Heart right ventricle (tissue), 16 donors: ENCODE measurements at regions of chr16 and their contacts with region 1.

Region 1: GRCh38 chr16:69741919-69742904 is 12.5 kb downstream of the NOB1 start:
- DNase-seq: peak; percentile 80 to 82
- ATAC-seq: peak in 7 of 8 donors; percentile 53 to 70 (median 65)
- H3K4me3 ChIP-seq: no peak overlapping the region
- H3K27ac ChIP-seq: peak overlapping the region in 6 of 10 donors; percentile 2 to 66 (median 42)
- H3K4me1 ChIP-seq: peaks cover 0 to 28% (median 13%) of the 10 kb centered on the region in 9 donors
- H3K27me3 ChIP-seq: no peaks in the 10 kb centered on the region
- CTCF ChIP-seq: no peak

Region 2: DNA sequence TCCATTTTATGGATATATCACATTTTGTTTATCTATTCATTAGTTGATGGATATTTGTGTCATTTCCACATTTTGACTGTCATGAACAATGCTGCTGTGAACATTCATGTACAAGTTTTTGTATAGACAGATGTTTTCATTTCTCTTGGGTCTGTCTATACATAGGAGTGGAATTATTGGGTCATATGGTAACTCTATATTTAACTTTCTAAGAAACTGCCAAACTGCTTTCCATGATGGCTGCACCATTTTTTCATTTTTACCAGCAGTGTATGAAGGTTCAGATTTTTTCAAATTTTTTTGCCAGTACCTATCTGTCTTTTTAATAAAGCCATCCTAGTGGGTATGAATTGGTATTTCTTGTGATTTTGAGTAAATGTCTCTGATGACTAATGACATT is 160.9 kb before region 1 on chr16:
- intact Hi-C with region 1: no loop called
- DNase-seq: no peak
- ATAC-seq: no peak
- H3K4me3 ChIP-seq: no peak overlapping the region
- H3K27ac ChIP-seq: no peak overlapping the region
- H3K4me1 ChIP-seq: peaks cover 0 to 40% (median 11%) of the 10 kb centered on the region in 9 donors
- H3K27me3 ChIP-seq: no peaks in the 10 kb centered on the region
- CTCF ChIP-seq: no peak

Region 3: GRCh38 chr16:69726296-69727060 is 15.7 kb before region 1 on chr16 and contains the start of gene NQO1:
- intact Hi-C with region 1: loop called in 1 of 10 experiments (anchors 2 kb)
- DNase-seq: peak; percentile 91
- ATAC-seq: peak; percentile 96 to 98 (median 97)
- H3K4me3 ChIP-seq: peak within 1 kb of the TSS; percentile 32 to 67 (median 56)
- H3K27ac ChIP-seq: peak within 1 kb of the TSS; percentile 20 to 87 (median 81)
- H3K4me1 ChIP-seq: peaks cover 5 to 42% (median 27%) of the 10 kb centered on the region in 9 donors
- H3K27me3 ChIP-seq: no peaks in the 10 kb centered on the region
- CTCF ChIP-seq: no peak
- total RNA-seq, gene NQO1: 5.9 to 37.3 (median 12.2) TPM